Activated CD4-positive, alpha-beta T cell treated with anti-CD3 and anti-CD28 coated beads for 36 hours (primary cell): ENCODE measurements at regions of chr11 and their contacts with region 1.

Region 1: DNA sequence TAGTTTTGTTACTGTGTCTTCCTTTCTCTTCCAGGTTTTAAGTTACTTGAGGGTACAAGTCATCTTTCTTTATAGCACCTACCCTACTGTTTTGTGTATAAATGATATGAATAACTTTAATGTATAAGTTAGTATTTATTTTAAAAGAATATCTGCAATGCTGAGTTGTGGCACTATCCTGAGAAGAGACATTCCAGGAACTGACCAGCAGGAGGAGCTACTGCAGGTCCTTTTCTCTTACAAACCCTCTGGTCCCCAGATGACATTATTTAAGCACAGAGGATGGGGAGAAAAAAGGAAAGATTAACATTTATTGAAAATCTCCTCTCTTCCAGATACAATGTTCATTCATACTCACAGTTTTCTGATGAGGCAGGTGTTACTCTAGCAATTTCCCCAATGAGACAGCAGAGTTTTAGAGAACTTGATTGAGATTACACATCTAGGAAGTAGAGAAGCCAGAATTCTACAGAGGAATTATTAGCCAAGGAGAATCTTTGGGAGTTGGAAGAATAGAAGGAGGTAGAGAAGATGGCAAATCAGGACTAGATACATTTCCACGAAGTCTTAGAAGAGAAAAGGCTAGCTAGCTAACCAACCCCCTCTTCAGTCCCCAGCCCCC is 541.2 kb upstream of the API5 start:
- DNase-seq: peak; percentile 11
- ATAC-seq: no peak
- H3K4me3 Mint-ChIP-seq: no peak overlapping the region
- H3K27ac Mint-ChIP-seq: no peak overlapping the region
- H3K4me1 Mint-ChIP-seq: no peaks in the 10 kb centered on the region
- H3K27me3 Mint-ChIP-seq: no peaks in the 10 kb centered on the region

Region 2: DNA sequence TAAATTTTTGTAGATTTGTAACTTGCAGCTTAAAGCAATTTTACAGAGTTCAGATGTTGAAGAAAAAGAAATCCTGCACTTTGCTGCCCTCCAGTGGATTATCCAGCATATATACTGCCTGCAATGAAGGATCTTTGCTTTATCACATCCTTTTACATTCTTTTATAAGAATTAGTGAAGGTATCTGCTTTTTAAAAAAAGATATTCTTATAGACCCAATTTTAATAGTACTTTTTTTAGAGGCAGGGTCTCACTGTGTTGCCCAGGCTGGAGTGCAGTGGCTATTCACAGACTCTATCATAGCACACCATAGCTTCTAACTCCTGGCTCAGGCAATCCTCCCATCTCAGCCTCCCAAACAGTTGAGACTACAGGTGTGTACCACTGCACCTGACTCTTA is 648.9 kb after region 1 on chr11:
- CTCF ChIA-PET with region 1: no interaction called
- POLR2A ChIA-PET with region 1: no interaction called
- intact Hi-C with region 1: loop called in 1 of 2 experiments (anchors 5 kb)
- DNase-seq: peak; percentile 56
- ATAC-seq: peak; percentile 69
- H3K4me3 Mint-ChIP-seq: no peak overlapping the region
- H3K27ac Mint-ChIP-seq: no peak overlapping the region
- H3K4me1 Mint-ChIP-seq: peaks cover 2% of the 10 kb centered on the region
- H3K27me3 Mint-ChIP-seq: no peaks in the 10 kb centered on the region

Region 3: GRCh38 chr11:43547889-43548381 is 777.4 kb after region 1 on chr11:
- CTCF ChIA-PET with region 1: no interaction called
- POLR2A ChIA-PET with region 1: no interaction called
- intact Hi-C with region 1: no loop called
- DNase-seq: peak; percentile 23
- ATAC-seq: peak; percentile 19
- H3K4me3 Mint-ChIP-seq: no peak overlapping the region
- H3K27ac Mint-ChIP-seq: no peak overlapping the region
- H3K4me1 Mint-ChIP-seq: peaks cover 2% of the 10 kb centered on the region
- H3K27me3 Mint-ChIP-seq: peaks cover 44% of the 10 kb centered on the region